B cell (primary cell): ENCODE measurements at regions of chr3 and their contacts with region 1.

Region 1: DNA sequence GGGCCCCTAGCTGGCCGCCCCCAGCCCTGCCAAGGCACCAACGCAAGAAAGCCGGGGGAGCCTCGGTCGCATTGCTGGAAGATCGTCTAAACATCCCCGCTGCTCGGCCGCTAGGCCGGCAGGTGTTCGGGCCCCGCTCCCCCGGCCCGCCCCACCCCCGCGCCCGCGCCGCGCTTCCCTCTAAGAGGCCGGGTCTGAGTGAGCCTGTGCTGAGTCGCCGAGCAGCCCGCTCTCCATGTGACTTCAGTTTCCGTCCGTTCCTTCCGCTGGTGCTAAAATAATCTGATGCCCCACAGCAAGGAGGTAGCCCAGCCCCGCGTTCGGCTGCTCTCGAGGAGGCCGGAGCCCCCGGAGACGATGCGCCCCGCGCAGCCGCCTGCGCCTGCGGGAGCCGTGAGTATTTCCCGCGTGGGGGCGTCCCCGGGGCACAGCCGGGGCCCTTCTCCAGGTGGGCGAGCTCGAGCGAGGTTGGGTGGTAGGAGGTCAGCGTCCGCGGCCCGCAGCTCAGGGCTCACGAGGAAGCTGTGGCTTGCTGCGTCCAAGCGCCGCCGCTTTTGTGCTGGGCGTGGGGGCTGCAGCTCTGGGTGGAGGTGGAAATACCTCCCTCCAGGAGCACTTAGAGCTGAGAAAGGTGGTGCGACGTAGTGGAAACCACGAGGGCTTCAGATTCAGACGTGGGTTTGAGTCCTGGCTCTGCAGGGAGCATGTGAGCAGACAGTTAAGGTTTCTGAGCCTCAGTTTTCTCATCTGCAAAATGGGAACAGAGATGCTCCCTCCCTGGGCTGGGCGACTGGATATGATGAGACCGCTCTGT is at the start of gene NRROS:
- DNase-seq: peak; percentile 91
- ATAC-seq: peak; percentile 48
- H3K4me3 ChIP-seq: peak within 1 kb of the TSS; percentile 80 to 88 (median 83)
- H3K4me3 Mint-ChIP-seq: peak within 1 kb of the TSS; percentile 89
- H3K27ac ChIP-seq: peak within 1 kb of the TSS; percentile 85 to 93
- H3K27ac Mint-ChIP-seq: peak within 1 kb of the TSS; percentile 99
- H3K4me1 ChIP-seq: peaks cover 58 to 71% of the 10 kb centered on the region in 2 donors
- H3K4me1 Mint-ChIP-seq: peaks cover 73% of the 10 kb centered on the region
- H3K27me3 ChIP-seq: no peaks in the 10 kb centered on the region
- H3K27me3 Mint-ChIP-seq: no peaks in the 10 kb centered on the region
- CTCF ChIP-seq: no peak
- total RNA-seq, gene NRROS: 85.9 and 87.9 TPM in 2 replicates

Region 2: DNA sequence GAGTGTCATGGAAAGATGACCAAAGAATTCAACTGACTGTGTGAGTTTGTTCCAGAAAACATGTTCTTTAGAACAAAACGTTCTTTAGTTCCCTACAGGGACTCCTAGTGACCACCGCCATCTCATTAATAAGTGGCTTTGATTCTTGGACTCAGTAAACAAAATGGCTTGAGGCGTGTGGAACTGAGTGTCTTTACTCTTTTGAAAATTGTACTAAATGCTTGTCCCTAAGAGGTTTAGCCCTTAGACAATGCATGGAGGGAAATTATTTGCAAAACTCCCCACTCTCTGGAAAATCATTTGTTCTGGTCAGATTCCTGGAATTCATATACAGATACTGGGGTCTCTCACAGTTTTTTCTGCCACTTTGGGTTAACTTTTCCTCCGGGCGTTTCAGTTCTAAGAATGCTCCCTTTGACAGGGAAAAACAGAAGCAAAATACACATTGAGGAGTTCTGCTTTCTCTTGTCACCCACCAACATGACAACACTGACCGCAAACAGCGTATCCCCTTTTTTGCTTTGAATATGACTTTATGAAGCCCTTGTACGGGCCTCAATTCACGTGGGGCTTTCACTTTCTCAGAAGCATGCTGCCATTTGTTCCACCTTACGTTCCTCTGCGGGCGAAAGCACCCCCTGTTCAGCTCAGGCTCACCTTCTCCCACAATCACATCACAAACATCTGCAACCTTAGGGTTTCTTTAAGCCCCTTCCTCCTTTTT is 15.5 kb before region 1 on chr3:
- CTCF ChIA-PET with region 1: no interaction called
- POLR2A ChIA-PET with region 1: interaction called, 6 read pairs
- intact Hi-C with region 1: loop called (anchors 2 kb)
- DNase-seq: peak; percentile 85
- ATAC-seq: peak; percentile 87
- H3K4me3 ChIP-seq: peak overlapping the region; percentile 14 to 48 (median 21)
- H3K4me3 Mint-ChIP-seq: peak overlapping the region; percentile 76
- H3K27ac ChIP-seq: peak overlapping the region; percentile 37 to 48
- H3K27ac Mint-ChIP-seq: peak overlapping the region; percentile 79
- H3K4me1 ChIP-seq: peaks cover 11 to 22% of the 10 kb centered on the region in 2 donors
- H3K4me1 Mint-ChIP-seq: peaks cover 18% of the 10 kb centered on the region
- H3K27me3 ChIP-seq: no peaks in the 10 kb centered on the region
- H3K27me3 Mint-ChIP-seq: no peaks in the 10 kb centered on the region
- CTCF ChIP-seq: no peak

Region 3: GRCh38 chr3:196670339-196670738 is 30.6 kb after region 1 on chr3:
- CTCF ChIA-PET with region 1: no interaction called
- POLR2A ChIA-PET with region 1: no interaction called
- intact Hi-C with region 1: loop called (anchors 2 kb)
- DNase-seq: peak; percentile 36
- ATAC-seq: peak; percentile 78
- H3K4me3 ChIP-seq: peak overlapping the region; percentile 8 to 46 (median 23)
- H3K4me3 Mint-ChIP-seq: peak overlapping the region; percentile 78
- H3K27ac ChIP-seq: peak overlapping the region; percentile 31 to 71
- H3K27ac Mint-ChIP-seq: peak overlapping the region; percentile 78
- H3K4me1 ChIP-seq: peaks cover 26 to 32% of the 10 kb centered on the region in 2 donors
- H3K4me1 Mint-ChIP-seq: peaks cover 50% of the 10 kb centered on the region
- H3K27me3 ChIP-seq: no peaks in the 10 kb centered on the region
- H3K27me3 Mint-ChIP-seq: no peaks in the 10 kb centered on the region
- CTCF ChIP-seq: no peak

Region 4: DNA sequence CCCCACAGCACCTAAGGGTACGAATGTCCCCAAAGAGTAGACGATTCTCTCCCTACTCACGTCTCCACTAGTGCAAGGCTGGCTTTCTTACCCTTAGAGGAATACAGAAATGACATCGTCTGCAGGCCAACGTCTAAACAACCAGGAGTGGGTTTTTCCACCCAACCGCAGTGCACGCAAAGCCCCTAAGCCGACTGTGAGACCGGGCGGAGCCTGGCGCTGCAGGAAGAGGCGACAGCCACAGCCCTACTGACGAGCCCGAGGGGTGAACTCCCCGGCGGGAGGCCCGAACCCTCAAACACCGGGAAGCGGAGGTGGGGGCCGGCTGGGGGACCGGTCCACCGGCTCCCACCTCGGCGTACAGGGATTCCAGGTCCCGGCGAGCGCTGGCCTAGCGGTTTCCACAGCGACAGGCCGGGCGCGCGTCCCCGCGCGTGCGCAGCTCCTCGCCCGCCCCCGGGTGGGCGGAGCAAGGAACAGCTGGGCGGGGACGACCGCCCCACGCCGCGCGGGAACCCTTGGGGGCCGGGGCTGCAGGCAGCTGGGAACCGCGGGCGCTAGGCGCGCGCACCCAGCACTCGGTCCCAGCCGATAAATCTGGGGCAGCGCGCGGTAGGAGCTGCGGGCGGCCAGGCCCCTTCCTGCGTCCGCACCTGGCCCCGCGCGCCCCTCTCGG is 72.3 kb after region 1 on chr3 and contains the starts of genes CEP19 and PIGX:
- CTCF ChIA-PET with region 1: interaction called, 6 read pairs
- POLR2A ChIA-PET with region 1: interaction called, 3 read pairs
- intact Hi-C with region 1: loop called (anchors 2 kb)
- DNase-seq: peak; percentile 97
- ATAC-seq: peak; percentile 83
- H3K4me3 ChIP-seq: peak within 1 kb of the TSS; percentile 75 to 94 (median 87)
- H3K4me3 Mint-ChIP-seq: peak within 1 kb of the TSS; percentile 96
- H3K27ac ChIP-seq: peak within 1 kb of the TSS; percentile 91 to 96
- H3K27ac Mint-ChIP-seq: peak within 1 kb of the TSS; percentile 94
- H3K4me1 ChIP-seq: peaks cover 13 to 16% of the 10 kb centered on the region in 2 donors
- H3K4me1 Mint-ChIP-seq: peaks cover 14% of the 10 kb centered on the region
- H3K27me3 ChIP-seq: no peaks in the 10 kb centered on the region
- H3K27me3 Mint-ChIP-seq: no peaks in the 10 kb centered on the region
- CTCF ChIP-seq: no peak
- total RNA-seq, gene CEP19: 4.6 and 5.0 TPM in 2 replicates
- total RNA-seq, gene PIGX: 18.9 and 21.5 TPM in 2 replicates